ENCODE measurements at regions of chr10 and their contacts with region 1.

Region 1: GRCh38 chr10:5684318-5684970 is at the start of gene TASOR2:
- DNase-seq: peak; percentile 94
- ATAC-seq: peak; percentile 83
- H3K4me3 Mint-ChIP-seq: peak within 1 kb of the TSS; percentile 99
- H3K27ac Mint-ChIP-seq: peak within 1 kb of the TSS; percentile 94
- H3K4me1 Mint-ChIP-seq: peaks cover 44% of the 10 kb centered on the region
- H3K27me3 Mint-ChIP-seq: no peaks in the 10 kb centered on the region
- CTCF ChIP-seq: no peak
- total RNA-seq, gene TASOR2: 69.8 and 81.4 TPM in 2 replicates

Region 2: GRCh38 chr10:5317547-5318107 is 366.8 kb before region 1 on chr10:
- CTCF ChIA-PET with region 1: no interaction called
- POLR2A ChIA-PET with region 1: no interaction called
- intact Hi-C with region 1: no loop called
- DNase-seq: no peak
- ATAC-seq: no peak
- H3K4me3 Mint-ChIP-seq: no peak overlapping the region
- H3K27ac Mint-ChIP-seq: no peak overlapping the region
- H3K4me1 Mint-ChIP-seq: peaks cover 2% of the 10 kb centered on the region
- H3K27me3 Mint-ChIP-seq: no peaks in the 10 kb centered on the region
- CTCF ChIP-seq: no peak

Region 3: DNA sequence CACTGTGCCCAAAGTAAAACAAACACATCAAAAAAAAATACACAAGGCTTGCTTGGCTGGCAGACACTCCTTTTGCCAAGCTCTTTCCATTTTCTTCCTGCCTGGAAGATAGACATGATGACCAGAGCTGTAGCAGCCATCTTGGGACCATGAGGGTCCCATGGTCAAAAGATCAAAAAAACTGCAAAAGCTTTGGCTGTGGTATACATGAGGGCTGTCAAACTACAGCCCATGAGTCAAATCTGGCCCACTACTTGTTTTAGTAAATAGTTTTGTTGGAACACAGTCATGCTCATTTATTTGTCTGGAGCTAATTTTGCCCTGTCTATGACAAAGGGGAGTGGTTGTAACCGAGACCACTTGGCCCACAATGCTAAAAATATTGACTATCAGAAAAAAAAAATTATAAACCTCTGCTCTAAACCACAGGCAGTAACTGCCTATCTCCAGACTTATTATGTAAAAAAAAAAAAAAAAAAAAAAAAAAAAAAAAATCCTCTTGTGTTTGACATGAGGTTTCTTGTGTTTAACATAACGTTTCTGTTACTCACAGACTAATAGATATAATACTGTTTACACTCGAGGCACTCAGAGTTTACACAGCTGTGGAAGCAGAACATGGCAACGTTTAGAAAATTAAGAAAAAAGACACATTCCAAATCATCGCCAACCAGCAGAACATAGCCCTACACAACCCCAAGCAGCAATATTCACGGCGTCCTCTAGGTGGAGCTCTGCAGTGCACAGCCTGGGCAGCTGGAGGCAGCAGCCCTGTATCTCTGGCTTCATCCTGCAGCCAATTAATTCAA is 54.9 kb before region 1 on chr10:
- CTCF ChIA-PET with region 1: no interaction called
- POLR2A ChIA-PET with region 1: no interaction called
- intact Hi-C with region 1: loop called (anchors 1 kb)
- DNase-seq: peak; percentile 71
- ATAC-seq: peak; percentile 98
- H3K4me3 Mint-ChIP-seq: no peak overlapping the region
- H3K27ac Mint-ChIP-seq: no peak overlapping the region
- H3K4me1 Mint-ChIP-seq: peaks cover 10% of the 10 kb centered on the region
- H3K27me3 Mint-ChIP-seq: peaks cover 5% of the 10 kb centered on the region
- CTCF ChIP-seq: peak; percentile 78

Region 4: DNA sequence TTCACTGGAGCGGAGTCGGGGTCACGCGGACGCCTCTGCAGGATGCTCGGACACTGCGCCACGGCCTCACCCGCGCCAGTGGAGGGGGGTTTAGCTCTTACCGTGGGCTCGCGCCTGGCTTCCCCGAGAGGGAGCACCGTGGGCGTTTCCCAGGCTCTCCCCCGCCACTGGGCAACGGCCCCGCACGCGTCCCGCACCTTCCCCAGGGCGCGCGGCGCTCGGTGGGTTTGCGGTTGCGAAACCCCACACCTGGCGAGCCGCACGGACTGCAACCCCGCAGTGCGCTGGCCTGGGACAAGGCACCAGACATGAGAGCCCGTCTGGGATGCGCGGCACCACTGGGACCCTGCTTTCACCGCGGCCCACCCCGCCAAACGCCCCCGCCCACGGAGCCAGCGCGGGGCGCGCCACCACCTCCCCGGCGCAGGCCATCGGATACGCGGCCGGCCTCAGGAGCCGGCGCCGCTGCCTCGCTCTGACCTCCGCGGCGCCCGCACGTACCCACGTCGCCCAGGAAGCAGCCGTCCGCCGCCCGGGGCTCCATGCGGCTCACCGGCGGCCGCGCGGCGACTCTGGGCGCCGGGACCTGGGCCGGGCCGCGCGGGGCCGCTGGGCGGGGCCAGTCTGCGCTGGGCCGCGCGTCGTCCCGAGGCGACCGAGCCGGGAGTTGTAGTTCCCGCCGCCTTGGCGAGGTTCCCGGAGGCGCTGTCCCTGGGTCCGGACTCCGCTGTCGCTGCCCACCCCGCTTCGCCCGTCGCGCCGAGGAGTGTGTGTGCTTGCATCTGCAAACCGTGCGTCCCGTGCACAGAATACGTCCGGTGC is 18.2 kb before region 1 on chr10 and contains the start of gene ASB13:
- CTCF ChIA-PET with region 1: interaction called, 3 read pairs
- POLR2A ChIA-PET with region 1: interaction called, 4 read pairs
- intact Hi-C with region 1: loop called (anchors 2 kb)
- DNase-seq: peak; percentile 44
- ATAC-seq: peak; percentile 74
- H3K4me3 Mint-ChIP-seq: peak within 1 kb of the TSS; percentile 89
- H3K27ac Mint-ChIP-seq: peak within 1 kb of the TSS; percentile 16
- H3K4me1 Mint-ChIP-seq: peaks cover 20% of the 10 kb centered on the region
- H3K27me3 Mint-ChIP-seq: no peaks in the 10 kb centered on the region
- CTCF ChIP-seq: no peak
- total RNA-seq, gene ASB13: 3.3 and 3.5 TPM in 2 replicates

Region 5: DNA sequence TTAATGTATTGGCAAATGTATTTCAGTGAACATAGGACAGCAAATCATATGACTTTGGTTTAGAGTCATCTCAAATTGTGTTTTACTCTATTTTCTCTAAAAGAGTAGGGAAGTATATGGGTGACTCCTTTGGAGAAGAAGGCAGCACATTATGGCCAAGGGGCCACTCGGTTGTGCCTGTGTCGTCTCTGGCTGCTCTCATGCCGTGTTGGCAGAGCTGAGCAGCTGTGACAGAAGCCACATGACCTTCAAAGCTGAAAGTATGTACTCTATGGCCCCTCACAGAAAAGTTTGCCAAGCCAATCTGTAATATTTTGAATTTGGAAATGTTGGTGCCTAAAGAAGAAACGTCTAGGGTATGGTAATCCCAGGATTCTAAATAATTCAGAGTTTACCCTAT is 47.7 kb after region 1 on chr10:
- CTCF ChIA-PET with region 1: no interaction called
- POLR2A ChIA-PET with region 1: no interaction called
- intact Hi-C with region 1: no loop called
- DNase-seq: no peak
- ATAC-seq: no peak
- H3K4me3 Mint-ChIP-seq: no peak overlapping the region
- H3K27ac Mint-ChIP-seq: no peak overlapping the region
- H3K4me1 Mint-ChIP-seq: peaks cover 2% of the 10 kb centered on the region
- H3K27me3 Mint-ChIP-seq: no peaks in the 10 kb centered on the region
- CTCF ChIP-seq: no peak

Region 6: DNA sequence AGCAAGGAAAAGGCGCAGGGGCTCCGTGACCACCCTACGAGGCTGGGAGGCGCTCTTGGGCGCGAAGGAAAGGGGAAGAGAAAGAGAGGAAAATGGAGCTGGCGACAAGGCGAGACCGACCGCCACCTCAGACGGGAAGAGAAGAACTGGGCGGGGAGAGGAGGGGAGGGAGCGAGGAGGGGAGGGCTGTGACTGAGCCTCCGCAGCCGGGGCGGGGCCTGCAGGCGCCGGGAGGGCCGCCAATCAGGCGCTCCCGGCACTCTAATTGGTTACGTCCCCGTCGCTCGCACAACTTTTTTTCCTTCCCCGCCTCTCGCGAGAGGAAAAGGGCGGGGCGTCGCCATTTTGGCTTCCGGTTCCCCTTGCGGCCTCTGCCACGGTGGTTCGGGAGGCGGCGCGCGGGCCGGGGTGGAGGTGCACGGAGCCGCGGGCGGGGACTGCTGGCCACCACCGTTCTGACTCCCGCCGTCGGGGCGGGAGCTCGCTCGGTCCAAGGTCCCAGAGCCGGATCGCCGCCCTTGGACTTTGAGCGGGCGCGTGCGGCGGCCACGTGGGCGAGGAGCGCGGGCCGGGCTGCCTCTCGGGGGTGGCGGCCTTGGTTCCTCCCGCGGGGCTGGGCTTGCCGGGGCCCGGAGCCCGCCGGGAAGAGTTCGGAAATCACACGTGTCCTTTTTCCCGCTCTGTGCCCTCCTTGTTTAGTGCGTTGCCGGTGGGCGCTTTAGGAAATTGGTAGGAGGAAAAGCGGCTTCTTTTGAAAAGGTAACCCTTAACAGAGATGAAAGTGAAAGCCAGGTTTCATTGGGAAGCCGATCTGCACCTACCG is 129.1 kb after region 1 on chr10 and contains the start of gene GDI2:
- CTCF ChIA-PET with region 1: no interaction called
- POLR2A ChIA-PET with region 1: interaction called, 6 read pairs
- intact Hi-C with region 1: loop called (anchors 1 kb)
- DNase-seq: peak; percentile 96
- ATAC-seq: peak; percentile 82
- H3K4me3 Mint-ChIP-seq: peak within 1 kb of the TSS; percentile 91
- H3K27ac Mint-ChIP-seq: peak within 1 kb of the TSS; percentile 94
- H3K4me1 Mint-ChIP-seq: peaks cover 79% of the 10 kb centered on the region
- H3K27me3 Mint-ChIP-seq: no peaks in the 10 kb centered on the region
- CTCF ChIP-seq: no peak
- total RNA-seq, gene GDI2: 289 and 301 TPM in 2 replicates

Region 7: DNA sequence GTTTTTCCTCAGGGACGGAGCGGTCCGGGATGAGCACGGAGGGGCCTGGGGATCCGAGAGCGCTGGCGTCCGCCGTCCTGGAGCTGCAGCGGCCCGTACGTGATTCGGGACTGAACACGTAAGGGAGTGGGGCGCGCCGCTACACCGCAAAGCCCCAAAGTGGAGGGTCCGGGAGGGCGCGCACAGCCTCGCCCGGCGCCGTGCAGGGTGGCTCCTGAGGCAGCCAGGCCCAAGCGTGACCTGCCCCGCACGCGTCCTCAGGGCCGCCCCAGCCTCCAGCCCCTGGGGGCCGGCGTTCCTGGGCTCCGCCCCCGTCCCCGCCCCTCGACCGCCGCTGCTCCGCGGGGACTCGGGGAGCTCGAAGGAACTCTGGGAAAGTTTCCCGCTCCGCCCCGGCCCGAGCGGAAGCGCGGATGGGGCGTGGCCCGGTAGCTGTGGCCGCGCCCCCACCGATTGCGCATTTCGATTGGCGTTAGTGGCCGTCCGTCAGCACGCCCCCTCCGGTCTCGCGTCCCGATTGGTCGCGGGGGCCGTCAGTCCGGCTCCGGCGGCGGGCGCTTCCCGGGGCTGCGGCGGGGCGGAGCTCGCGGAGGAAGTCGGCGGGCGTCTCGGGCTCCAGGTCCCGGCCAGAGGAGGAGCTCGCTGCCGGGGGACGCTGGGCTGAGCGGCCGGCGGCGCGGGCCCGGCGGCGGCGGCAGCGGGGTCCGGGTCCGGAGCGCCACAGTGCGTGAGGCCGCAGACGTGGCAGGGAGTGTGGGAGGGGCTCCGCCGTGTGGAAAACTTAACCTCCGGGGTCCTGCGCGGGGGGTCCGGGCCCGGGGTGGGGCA is 205.4 kb after region 1 on chr10 and contains the starts of genes ANKRD16 and FBH1:
- CTCF ChIA-PET with region 1: no interaction called
- POLR2A ChIA-PET with region 1: no interaction called
- intact Hi-C with region 1: loop called (anchors 1 kb)
- DNase-seq: peak; percentile 100
- ATAC-seq: peak; percentile 85
- H3K4me3 Mint-ChIP-seq: peak within 1 kb of the TSS; percentile 87
- H3K27ac Mint-ChIP-seq: peak within 1 kb of the TSS; percentile 78
- H3K4me1 Mint-ChIP-seq: peaks cover 59% of the 10 kb centered on the region
- H3K27me3 Mint-ChIP-seq: no peaks in the 10 kb centered on the region
- CTCF ChIP-seq: no peak
- total RNA-seq, gene ANKRD16: 9.2 and 11.1 TPM in 2 replicates
- total RNA-seq, gene FBH1: 65.5 and 68.7 TPM in 2 replicates

Region 8: DNA sequence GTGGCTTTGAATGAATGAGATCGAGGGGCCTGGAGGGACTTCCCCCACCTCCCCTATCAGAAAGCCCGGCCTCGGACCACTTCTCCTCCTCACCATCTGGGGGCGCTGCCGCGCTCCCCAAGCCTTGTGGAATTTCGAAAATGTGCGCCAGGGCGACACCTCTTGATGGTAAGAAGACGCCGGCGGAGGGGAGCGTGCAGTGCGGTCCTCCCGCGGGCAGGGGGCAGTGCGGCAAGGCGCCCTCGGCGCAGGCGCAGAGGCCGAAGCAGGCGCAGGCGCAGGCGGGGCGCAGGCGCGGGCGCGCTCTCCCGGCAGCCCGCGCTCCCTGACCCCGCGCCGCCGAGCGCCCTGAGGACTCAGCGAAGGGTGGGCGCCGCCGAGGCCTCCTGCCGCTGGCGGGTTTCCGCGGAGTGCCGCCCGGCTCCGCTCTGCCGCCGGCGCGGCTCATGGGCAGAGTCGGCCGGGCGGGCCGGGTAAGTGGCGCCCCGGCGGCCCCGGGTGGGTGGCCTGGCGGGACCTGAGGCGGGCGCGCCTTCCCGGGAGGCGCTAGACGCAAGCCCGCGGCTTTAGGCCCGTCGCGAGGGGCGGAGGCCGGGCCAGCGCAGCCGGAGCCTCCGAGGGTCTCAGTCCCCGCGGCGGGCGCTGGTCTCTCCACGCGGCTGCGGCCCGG is 404.4 kb after region 1 on chr10 and contains the start of gene RBM17:
- CTCF ChIA-PET with region 1: no interaction called
- POLR2A ChIA-PET with region 1: no interaction called
- intact Hi-C with region 1: loop called (anchors 2 kb)
- DNase-seq: peak; percentile 99
- ATAC-seq: peak; percentile 85
- H3K4me3 Mint-ChIP-seq: peak within 1 kb of the TSS; percentile 97
- H3K27ac Mint-ChIP-seq: peak within 1 kb of the TSS; percentile 87
- H3K4me1 Mint-ChIP-seq: peaks cover 69% of the 10 kb centered on the region
- H3K27me3 Mint-ChIP-seq: no peaks in the 10 kb centered on the region
- CTCF ChIP-seq: peak; percentile 99
- total RNA-seq, gene RBM17: 207 and 209 TPM in 2 replicates

Measured in activated B cell treated with CpG ODN at 0.5 μM for 24 hours (primary cell).